WTC11 (cell line): ENCODE measurements at regions of chr20 and their contacts with region 1.

Region 1: DNA sequence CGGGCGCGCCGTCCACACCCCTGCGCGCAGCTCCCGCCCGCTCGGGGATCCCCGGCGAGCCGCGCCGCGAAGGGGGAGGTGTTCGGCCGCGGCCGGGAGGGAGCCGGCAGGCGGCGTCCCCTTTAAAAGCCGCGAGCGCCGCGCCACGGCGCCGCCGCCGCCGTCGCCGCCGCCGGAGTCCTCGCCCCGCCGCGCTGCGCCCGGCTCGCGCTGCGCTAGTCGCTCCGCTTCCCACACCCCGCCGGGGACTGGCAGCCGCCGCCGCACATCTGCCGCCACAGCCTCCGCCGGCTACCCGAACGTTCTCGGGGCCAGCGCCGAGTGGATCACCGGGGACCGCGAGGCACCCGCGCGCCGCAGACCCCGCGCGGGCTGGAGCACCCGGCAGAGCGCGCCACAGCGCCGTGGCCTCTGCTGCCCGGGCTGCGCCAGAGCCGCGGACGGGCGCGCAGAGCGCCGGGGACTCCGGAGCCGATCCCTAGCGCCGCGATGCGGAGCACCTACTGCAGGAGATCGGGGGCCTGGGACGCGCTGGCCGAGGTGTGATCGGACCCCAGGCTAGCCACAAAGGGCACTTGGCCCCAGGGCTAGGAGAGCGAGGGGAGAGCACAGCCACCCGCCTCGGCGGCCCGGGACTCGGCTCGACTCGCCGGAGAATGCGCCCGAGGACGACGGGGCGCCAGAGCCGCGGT is at the start of gene BMP2:
- DNase-seq: peak; percentile 53
- ATAC-seq: peak; percentile 21
- H3K4me3 Mint-ChIP-seq: peak within 1 kb of the TSS; percentile 75
- H3K27ac Mint-ChIP-seq: no peak within 1 kb of the TSS
- H3K4me1 Mint-ChIP-seq: peaks cover 49% of the 10 kb centered on the region
- H3K27me3 Mint-ChIP-seq: peaks cover 51% of the 10 kb centered on the region
- CTCF ChIP-seq: no peak
- total RNA-seq, gene BMP2: 0.96 to 1.3 TPM (median 1.2 TPM) in 3 replicates

Region 2: GRCh38 chr20:6623989-6624388 is 143.7 kb before region 1 on chr20:
- CTCF ChIA-PET with region 1: interaction called, 15 read pairs
- POLR2A ChIA-PET with region 1: no interaction called
- DNase-seq: no peak
- ATAC-seq: peak; percentile 93
- H3K4me3 Mint-ChIP-seq: no peak overlapping the region
- H3K27ac Mint-ChIP-seq: no peak overlapping the region
- H3K4me1 Mint-ChIP-seq: peaks cover 12% of the 10 kb centered on the region
- H3K27me3 Mint-ChIP-seq: no peaks in the 10 kb centered on the region
- CTCF ChIP-seq: no peak

Region 3: GRCh38 chr20:6636209-6637159 is 131.2 kb before region 1 on chr20:
- CTCF ChIA-PET with region 1: interaction called, 14 read pairs
- POLR2A ChIA-PET with region 1: no interaction called
- DNase-seq: no peak
- ATAC-seq: peak; percentile 78
- H3K4me3 Mint-ChIP-seq: no peak overlapping the region
- H3K27ac Mint-ChIP-seq: peak overlapping the region; percentile 26
- H3K4me1 Mint-ChIP-seq: peaks cover 16% of the 10 kb centered on the region
- H3K27me3 Mint-ChIP-seq: no peaks in the 10 kb centered on the region
- CTCF ChIP-seq: no peak

Region 4: GRCh38 chr20:6726761-6727160 is 40.9 kb before region 1 on chr20:
- CTCF ChIA-PET with region 1: no interaction called
- POLR2A ChIA-PET with region 1: no interaction called
- DNase-seq: no peak
- ATAC-seq: no peak
- H3K4me3 Mint-ChIP-seq: no peak overlapping the region
- H3K27ac Mint-ChIP-seq: no peak overlapping the region
- H3K4me1 Mint-ChIP-seq: no peaks in the 10 kb centered on the region
- H3K27me3 Mint-ChIP-seq: no peaks in the 10 kb centered on the region
- CTCF ChIP-seq: no peak

Region 5: GRCh38 chr20:6756693-6757595 is 10.7 kb before region 1 on chr20:
- CTCF ChIA-PET with region 1: no interaction called
- POLR2A ChIA-PET with region 1: no interaction called
- DNase-seq: no peak
- ATAC-seq: no peak
- H3K4me3 Mint-ChIP-seq: no peak overlapping the region
- H3K27ac Mint-ChIP-seq: no peak overlapping the region
- H3K4me1 Mint-ChIP-seq: peaks cover 10% of the 10 kb centered on the region
- H3K27me3 Mint-ChIP-seq: no peaks in the 10 kb centered on the region; the same call in 1 of the 2 replicates
- CTCF ChIP-seq: no peak

Region 6: GRCh38 chr20:6819605-6820004 is 51.9 kb after region 1 on chr20:
- CTCF ChIA-PET with region 1: interaction called, 12 read pairs
- POLR2A ChIA-PET with region 1: no interaction called
- DNase-seq: no peak
- ATAC-seq: peak; percentile 63
- H3K4me3 Mint-ChIP-seq: no peak overlapping the region
- H3K27ac Mint-ChIP-seq: no peak overlapping the region
- H3K4me1 Mint-ChIP-seq: peaks cover 38% of the 10 kb centered on the region
- H3K27me3 Mint-ChIP-seq: peaks cover 19% of the 10 kb centered on the region
- CTCF ChIP-seq: no peak